CD4-positive, alpha-beta memory T cell (primary cell): ENCODE measurements at regions of chr19 and their contacts with region 1.

Region 1: DNA sequence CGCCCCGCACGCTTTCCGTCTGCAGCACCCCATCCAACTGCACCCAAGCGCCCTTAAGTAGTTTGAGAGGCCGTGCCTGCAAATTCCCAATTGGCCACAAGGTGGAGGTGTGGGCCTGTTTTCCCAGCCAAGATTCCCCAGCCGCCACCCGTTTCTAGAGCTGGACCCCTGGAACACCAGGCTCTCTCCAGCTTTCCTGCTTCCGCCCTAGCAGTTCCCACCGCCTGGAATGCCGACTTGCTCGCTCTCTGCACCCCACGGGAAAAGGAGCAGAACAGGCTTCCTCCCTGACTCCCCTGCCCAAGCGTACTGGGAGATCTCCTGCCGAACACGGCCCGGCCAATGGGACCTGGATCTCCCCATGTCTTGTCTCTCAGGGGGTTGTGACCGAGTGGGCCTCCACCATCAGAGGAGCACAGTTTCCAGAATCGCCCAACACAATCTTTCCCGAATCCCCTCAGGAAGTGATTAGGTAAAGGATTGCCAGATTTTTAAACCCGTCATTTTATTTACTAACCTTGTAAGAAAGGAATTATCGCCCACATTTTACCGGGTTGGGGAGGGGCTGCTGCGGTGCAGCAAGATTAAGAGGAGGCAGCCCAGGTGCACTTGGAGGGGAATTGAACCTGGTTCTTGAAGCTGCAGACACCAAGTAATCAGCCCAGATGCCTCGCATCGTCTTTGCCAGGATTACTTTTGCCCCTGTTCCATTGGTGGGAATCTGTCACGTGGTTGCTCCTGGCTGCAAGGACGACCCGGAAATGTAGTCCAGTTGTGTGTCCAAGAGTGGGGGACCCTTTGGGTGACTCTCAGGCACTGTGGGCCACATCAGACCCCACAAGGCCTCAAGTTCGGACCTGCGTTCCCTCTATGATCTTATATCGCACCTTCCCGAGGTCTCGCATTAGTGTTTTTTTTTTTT is 3.5 kb upstream of the NAPSA start:
- DNase-seq: peak; percentile 71 to 78 (median 78)
- H3K4me3 ChIP-seq: peak overlapping the region; percentile 32 to 88
- H3K4me3 Mint-ChIP-seq: peak overlapping the region; percentile 85 to 97 (median 90)
- H3K27ac ChIP-seq: peak overlapping the region; percentile 56
- H3K27ac Mint-ChIP-seq: peak overlapping the region; percentile 62 to 96 (median 90)
- H3K4me1 ChIP-seq: peaks cover 26% of the 10 kb centered on the region
- H3K4me1 Mint-ChIP-seq: peaks cover 17 to 43% (median 28%) of the 10 kb centered on the region in 4 donors
- H3K27me3 ChIP-seq: no peaks in the 10 kb centered on the region
- H3K27me3 Mint-ChIP-seq: no peaks in the 10 kb centered on the region

Region 2: DNA sequence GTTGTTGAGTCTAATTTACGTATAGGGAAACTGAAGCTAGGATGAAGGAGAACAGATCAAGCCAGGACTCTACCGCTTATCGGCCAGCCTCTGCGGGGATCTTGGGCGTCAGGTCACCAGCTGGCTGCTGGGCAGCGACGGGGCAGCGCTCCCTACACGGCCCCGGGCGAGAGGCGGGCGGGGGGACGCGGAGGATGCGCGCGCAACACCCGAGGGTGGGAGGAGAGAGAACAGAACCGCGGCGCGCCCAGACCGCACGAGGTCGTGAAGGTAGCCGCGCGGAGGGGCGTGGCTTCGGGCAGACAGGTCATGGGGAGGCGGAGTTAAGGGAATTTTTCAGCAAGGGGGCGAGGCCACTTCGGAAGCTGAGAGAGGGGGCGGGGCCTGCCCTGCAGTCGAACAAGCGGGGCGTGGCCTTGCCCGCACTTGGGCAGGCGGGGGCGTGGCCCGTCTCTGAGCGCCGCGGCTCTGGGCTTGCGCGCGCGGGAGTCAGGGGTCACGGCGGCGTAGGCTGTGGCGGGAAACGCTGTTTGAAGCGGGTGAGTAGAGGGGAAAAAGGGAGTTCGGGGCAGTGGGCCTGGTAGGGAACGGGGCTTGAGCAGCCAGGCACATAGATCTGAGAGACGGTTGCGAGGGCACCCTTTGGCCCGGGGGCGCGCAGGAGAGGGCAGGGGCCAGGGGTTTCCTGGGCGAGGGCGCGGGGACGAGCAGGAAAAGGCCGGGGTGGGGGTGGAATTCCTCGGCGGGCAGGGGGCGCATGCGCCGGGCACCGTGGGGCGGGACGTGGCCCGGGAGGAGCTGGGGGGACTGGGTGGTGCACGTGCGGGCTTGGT is 15.2 kb after region 1 on chr19 and contains the start of gene POLD1:
- CTCF ChIA-PET with region 1: no interaction called
- POLR2A ChIA-PET with region 1: interaction called, 20 read pairs
- intact Hi-C with region 1: loop called (anchors 1 kb)
- DNase-seq: peak; percentile 98 to 99 (median 99)
- H3K4me3 ChIP-seq: peak within 1 kb of the TSS; percentile 38 to 80
- H3K4me3 Mint-ChIP-seq: peak within 1 kb of the TSS; percentile 91 to 97 (median 94)
- H3K27ac ChIP-seq: peak within 1 kb of the TSS; percentile 67
- H3K27ac Mint-ChIP-seq: peak within 1 kb of the TSS; percentile 91 to 98 (median 94)
- H3K4me1 ChIP-seq: peaks cover 16% of the 10 kb centered on the region
- H3K4me1 Mint-ChIP-seq: peaks cover 22 to 39% (median 32%) of the 10 kb centered on the region in 4 donors
- H3K27me3 ChIP-seq: no peaks in the 10 kb centered on the region
- H3K27me3 Mint-ChIP-seq: no peaks in the 10 kb centered on the region
- total RNA-seq, gene POLD1: 40.4 to 41.1 TPM

Region 3: GRCh38 chr19:50414864-50415660 is 46.2 kb after region 1 on chr19:
- CTCF ChIA-PET with region 1: interaction called, 18 read pairs
- POLR2A ChIA-PET with region 1: interaction called, 6 read pairs
- intact Hi-C with region 1: loop called (anchors 1 kb)
- DNase-seq: peak; percentile 59 to 66 (median 64)
- H3K4me3 ChIP-seq: no peak overlapping the region
- H3K4me3 Mint-ChIP-seq: no peak overlapping the region
- H3K27ac ChIP-seq: no peak overlapping the region
- H3K27ac Mint-ChIP-seq: peak overlapping the region in 1 of 7 donors; percentile 41
- H3K4me1 ChIP-seq: no peaks in the 10 kb centered on the region
- H3K4me1 Mint-ChIP-seq: peaks cover 0 to 7% (median 3%) of the 10 kb centered on the region in 4 donors
- H3K27me3 ChIP-seq: no peaks in the 10 kb centered on the region
- H3K27me3 Mint-ChIP-seq: peaks cover 8 to 10% of the 10 kb centered on the region in 2 donors

Region 4: DNA sequence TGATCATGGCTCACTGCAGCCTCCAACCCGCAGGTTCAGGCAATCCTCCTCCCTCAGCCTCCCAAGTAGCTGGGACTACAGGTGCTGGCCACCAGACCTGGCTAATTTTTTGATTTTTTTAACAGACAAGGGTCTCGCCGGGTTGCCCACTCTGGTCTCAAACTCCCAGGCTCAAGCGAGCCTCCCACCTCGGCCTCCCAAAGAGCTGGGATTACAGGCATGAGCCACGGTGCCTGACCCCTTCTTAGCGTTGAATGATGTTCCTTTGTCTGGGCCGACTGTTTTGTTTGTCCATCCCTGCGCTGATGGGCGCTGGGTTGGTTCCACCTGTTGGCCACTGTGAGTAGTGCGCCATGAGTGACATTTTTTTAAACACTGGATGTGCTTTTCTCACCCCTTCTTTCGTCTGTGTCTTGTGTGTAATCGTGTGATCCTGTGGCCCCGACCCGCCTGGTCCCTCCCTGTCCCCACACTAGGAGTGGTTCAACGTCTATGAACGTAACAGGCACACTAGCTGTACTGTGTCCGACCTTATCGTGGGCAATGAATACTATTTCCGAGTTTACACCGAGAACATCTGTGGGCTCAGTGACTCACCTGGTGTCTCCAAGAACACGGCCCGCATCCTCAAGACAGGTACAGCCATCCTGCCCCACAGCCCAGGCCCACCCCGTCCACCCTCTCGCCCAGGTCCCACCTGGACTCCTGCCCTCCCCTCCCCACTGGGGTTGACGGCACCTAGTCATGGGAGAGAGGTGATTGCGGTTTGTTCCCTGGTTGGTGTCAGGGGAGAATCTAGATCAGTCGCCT is 92.4 kb after region 1 on chr19:
- CTCF ChIA-PET with region 1: interaction called, 10 read pairs
- POLR2A ChIA-PET with region 1: interaction called, 3 read pairs
- intact Hi-C with region 1: loop called (anchors 1 kb)
- DNase-seq: peak in 4 of 5 donors; percentile 37 to 51 (median 46)
- H3K4me3 ChIP-seq: no peak overlapping the region
- H3K4me3 Mint-ChIP-seq: no peak overlapping the region
- H3K27ac ChIP-seq: no peak overlapping the region
- H3K27ac Mint-ChIP-seq: peak overlapping the region in 1 of 7 donors; percentile 63
- H3K4me1 ChIP-seq: no peaks in the 10 kb centered on the region
- H3K4me1 Mint-ChIP-seq: peaks cover 3 to 6% (median 4%) of the 10 kb centered on the region in 4 donors
- H3K27me3 ChIP-seq: peaks cover 2% of the 10 kb centered on the region
- H3K27me3 Mint-ChIP-seq: peaks cover 5 to 18% of the 10 kb centered on the region in 2 donors

Region 5: DNA sequence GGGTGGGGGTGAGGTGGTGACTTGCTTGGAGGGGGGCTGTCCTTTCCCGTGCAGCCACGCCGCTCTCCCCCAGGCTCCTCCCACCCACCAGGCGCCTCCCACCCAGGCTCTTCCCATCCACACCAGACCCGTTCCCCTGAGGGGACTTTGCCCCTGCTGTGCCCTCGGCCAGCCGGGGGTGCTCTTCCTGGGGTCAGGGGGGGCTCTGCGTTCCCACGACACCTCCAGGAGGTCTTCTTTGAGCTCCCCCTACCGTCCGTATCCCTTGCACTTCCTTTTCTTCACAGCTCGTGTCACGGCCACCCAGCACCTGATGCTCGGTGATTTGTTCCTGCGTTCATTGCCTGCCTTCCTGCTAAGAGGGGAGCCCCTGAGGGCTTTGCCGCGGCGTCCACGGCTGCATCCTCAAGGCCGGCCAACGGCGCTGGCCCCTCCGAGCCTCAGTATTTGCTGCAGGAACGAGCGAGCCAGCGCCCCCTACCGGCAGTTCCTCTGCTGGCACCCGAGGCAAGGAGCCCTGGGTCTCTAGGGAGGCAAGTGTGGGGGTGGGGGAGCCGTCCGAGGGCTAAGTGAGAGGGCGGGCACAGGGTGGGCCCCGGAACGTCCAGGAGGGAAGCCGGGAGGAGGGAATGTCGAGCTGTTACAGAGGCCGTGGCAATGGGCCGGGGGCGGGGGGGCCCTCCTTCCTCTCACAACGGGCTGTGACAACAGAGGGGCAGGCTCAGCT is 187.5 kb after region 1 on chr19:
- CTCF ChIA-PET with region 1: interaction called, 12 read pairs
- POLR2A ChIA-PET with region 1: no interaction called
- intact Hi-C with region 1: loop called (anchors 1 kb)
- DNase-seq: peak; percentile 57 to 66 (median 64)
- H3K4me3 ChIP-seq: peak overlapping the region; percentile 36 to 46
- H3K4me3 Mint-ChIP-seq: peak overlapping the region; percentile 85 to 96 (median 92)
- H3K27ac ChIP-seq: no peak overlapping the region
- H3K27ac Mint-ChIP-seq: peak overlapping the region in 5 of 7 donors; percentile 25 to 83 (median 65)
- H3K4me1 ChIP-seq: peaks cover 4% of the 10 kb centered on the region
- H3K4me1 Mint-ChIP-seq: peaks cover 5 to 15% (median 10%) of the 10 kb centered on the region in 4 donors
- H3K27me3 ChIP-seq: peaks cover 4% of the 10 kb centered on the region
- H3K27me3 Mint-ChIP-seq: peaks cover 37 to 56% of the 10 kb centered on the region in 2 donors